Activated CD8-positive, alpha-beta T cell treated with anti-CD3 and anti-CD28 coated beads for 36 hours (primary cell): ENCODE measurements at regions of chr1 and their contacts with region 1.

Region 1: DNA sequence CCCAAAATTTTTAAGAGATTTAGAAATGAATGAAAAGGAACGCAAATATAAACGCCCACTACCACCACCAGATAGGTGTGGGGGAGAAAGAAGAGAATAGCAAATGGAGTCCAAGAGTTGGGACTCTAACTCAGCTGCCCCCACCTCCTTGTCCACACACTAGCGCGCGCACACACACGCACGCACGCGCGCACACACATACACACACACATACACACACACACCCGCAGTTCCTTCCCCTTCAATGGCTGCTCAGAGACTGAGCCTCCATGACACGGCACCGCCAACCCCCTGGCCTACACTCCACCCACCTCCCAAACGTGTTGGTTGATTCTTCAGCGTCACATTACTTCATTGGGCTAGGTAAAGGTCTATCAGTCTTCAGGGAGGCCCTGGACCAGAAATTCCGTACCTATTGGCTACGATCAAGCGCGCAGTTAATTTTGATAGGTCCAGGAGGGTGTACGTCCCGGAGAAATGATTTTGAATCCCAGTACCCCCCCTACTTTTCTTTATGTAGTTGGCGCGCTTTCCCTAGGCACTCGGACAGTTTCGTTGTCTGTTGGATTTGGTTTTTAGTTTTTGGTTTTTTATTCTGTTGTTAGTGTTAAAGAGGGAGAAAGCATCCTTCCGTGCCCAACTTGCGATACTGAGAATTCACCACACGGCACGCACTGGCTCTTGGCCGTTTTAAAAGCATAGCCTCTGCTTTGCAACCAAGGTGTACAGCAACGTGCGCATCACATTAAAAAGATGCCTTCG is at the start of gene ANP32E:
- DNase-seq: peak; percentile 96
- ATAC-seq: peak; percentile 87
- H3K4me3 Mint-ChIP-seq: no peak within 1 kb of the TSS
- H3K27ac Mint-ChIP-seq: no peak within 1 kb of the TSS
- H3K4me1 Mint-ChIP-seq: peaks cover 12% of the 10 kb centered on the region
- H3K27me3 Mint-ChIP-seq: no peaks in the 10 kb centered on the region
- CTCF ChIP-seq: no peak
- total RNA-seq, gene ANP32E: 174 to 185 TPM

Region 2: DNA sequence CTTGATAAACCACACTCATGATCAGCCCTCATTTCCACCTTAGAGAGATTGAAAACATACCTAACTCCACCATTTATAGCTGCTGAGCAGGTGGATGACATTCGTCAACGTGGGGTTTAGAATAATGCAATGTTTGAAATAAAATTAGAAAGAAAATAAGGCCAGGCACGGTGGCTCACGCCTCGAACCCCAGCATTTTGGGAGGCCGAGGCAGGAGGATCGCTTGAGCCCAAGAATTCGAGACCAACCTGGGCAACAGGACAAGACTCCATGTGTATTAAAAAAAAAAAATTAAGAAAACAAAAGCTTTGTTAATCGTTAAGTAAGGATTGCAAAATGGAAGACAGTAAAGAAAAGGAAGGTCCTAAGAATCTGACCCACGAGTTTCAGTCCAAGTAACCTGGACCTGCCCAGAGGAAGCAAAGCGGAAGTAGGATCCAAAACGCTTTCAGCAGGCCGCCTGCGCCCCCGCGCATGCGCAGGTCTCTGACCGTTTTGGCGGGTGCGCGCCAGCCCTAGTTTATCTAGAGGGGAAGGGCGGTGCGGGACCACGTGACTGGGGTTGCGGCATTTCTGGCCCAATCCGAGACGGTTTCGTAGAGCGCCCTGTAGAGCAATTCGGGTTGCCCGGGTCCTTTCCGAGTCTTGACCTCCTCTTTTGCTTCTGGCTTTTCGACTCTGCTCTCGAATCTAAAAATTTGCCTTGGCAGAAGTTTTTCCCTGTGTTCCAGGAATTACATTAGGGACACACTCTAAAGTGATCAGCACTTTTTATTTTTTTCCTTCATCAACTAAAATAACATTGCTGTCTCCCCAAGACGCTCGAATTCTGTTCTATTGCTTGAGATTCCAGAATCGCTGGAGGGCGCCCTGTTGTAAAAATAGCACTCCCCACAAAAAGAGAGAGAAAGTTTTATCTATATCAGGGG is 22.6 kb before region 1 on chr1:
- CTCF ChIA-PET with region 1: interaction called, 3 read pairs
- POLR2A ChIA-PET with region 1: interaction called, 10 read pairs
- intact Hi-C with region 1: no loop called
- DNase-seq: peak; percentile 97
- ATAC-seq: peak; percentile 99
- H3K4me3 Mint-ChIP-seq: peak overlapping the region; percentile 81
- H3K27ac Mint-ChIP-seq: peak overlapping the region; percentile 96
- H3K4me1 Mint-ChIP-seq: peaks cover 14% of the 10 kb centered on the region
- H3K27me3 Mint-ChIP-seq: no peaks in the 10 kb centered on the region
- CTCF ChIP-seq: no peak

Region 3: DNA sequence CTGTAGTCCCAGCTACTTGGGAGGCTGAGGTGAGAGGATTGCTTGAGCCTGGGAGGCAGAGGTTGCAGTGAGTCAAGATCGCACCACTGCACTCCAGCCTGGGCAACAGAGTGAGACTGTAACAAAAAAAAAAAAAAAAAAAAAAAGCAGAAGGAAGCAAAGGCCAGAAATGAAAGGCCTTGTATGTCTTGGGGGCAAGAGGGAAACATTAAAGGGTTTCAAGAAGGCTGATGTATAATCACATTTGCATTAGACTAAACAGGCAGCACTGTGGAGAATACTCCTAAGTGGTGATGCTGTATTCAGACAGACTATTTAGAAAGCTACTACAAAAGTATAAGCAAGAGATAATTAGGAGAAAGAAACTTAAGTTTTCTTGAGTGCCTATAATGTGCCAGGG is 10.5 kb before region 1 on chr1:
- CTCF ChIA-PET with region 1: interaction called, 3 read pairs
- POLR2A ChIA-PET with region 1: interaction called, 11 read pairs
- intact Hi-C with region 1: no loop called
- DNase-seq: no peak
- ATAC-seq: no peak
- H3K4me3 Mint-ChIP-seq: no peak overlapping the region
- H3K27ac Mint-ChIP-seq: no peak overlapping the region
- H3K4me1 Mint-ChIP-seq: peaks cover 3% of the 10 kb centered on the region
- H3K27me3 Mint-ChIP-seq: no peaks in the 10 kb centered on the region
- CTCF ChIP-seq: no peak